Right ventricle myocardium inferior (tissue), 1 donor: ENCODE measurements at regions of chr1 and their contacts with region 1.

Region 1: DNA sequence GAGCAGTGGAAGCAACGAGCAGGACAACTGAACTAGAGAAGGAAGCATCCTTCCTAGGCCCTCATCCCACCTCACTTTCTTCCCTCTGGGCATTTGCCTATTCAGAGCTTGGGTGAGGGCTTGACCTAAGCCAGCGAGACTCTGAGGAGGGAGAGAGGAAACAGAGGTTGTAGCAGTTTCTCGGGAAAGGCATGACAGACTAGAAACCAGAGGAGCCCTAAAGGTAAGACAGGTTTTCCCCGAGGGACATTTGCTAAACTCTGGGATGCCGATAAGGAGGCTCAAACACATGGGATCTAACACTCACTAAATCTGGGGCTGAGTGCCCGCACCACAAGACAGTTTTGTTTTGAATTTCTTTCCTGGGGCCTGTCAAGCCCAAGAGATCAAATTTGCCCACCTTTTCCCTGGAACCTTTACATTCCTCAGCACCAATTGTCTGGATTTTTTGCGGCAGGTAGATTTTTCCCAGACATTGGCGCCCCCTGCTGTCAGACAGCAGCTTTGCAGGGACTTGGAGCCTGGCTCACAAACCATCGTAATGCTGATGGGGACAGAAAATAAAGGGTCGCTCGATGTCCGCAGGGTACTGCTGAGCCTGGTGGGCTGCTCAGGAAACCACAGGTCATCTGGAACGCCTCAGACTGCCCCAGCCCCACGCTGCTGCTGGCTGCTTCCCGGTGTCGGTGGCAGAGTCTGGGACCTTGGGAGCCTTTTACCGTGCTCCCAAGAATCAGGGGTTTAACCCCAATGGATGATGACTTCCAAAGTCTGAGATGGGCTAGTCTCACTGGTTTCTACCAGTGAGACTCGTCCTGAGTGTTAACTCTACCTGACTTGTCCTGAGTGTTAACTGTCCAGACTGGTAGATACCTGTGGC is 23.4 kb upstream of the TSPAN2 start:
- DNase-seq: no peak
- ATAC-seq: peak; percentile 49

Region 2: DNA sequence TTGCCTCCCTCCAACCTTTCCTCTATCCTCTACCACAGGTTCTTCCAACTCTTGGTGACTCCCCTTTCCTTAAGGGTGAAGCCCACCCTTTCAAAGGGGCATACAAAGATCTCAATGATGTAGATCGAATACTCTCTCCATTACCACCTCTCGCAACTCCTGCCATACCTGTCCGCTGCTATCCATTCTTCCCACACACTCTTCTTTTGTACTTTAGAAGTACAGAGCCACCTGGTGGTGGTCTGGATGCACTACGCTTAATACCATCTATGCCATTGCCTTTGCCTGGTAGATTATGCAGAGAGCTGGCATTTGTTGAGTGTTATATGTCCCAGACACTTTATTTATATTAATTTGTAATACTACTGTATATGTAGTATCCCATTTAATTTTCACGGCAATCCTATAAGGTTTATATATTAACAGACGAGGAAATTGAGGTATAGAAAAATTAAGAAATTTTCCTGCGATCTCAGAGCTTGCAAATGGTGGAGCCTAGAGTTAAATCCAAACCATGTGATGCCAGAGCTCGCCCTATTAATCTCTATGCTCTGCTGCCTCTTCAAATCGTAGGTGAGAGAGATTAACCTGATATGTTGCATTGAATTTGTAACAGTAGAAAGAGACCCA is 60.2 kb before region 1 on chr1:
- intact Hi-C with region 1: loop called (anchors 2 kb)
- DNase-seq: no peak
- ATAC-seq: peak; percentile 64

Region 3: GRCh38 chr1:115138968-115139367 is 26.2 kb after region 1 on chr1:
- intact Hi-C with region 1: no loop called
- DNase-seq: peak; percentile 90
- ATAC-seq: peak; percentile 92